Common myeloid progenitor, CD34-positive (primary cell): ENCODE measurements at regions of chr6 and their contacts with region 1.

Region 1: DNA sequence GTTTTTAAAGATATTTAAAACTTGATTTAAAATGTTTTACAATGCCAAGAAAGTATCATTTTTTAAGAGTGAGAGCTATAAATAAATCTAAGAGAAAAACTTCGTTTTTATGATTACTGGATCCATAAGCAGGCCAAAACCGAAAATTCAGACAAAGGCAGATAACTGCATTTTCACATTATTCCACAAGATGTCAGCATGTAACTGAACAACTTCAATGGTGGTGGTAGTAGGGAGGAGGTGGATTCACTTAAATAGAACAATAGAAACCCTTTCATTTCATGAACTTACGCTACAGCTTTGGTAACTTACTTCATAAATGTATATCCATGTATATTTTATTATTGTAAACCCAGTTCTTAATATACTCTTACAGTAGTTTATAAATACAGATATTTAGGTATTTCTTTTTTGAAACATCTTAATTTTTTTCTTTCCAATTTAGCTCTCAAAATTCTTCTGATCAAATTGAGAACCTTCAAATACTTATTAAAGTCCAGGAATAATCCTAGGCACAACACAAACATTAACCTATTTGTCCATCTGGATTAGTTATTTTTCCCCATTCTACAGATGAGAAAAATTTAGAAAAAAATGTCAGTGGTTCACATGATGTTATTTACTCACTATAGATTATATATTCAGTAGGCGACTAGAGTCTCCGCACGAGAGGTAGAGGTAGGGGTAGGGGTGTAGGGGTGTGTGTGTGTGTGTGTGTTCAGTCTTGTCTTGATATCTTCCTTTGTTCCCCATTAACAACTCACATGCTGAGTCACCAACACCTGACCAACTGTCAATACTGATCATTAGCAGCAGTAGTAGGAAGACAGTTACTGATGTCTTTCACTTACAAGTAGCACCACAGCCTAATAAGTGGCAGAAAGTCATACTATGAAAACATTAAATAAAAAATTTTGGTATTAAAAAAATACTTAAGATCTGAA is 111.5 kb downstream of the ARHGAP18 start:
- DNase-seq: peak; percentile 77 to 86 (median 82)
- H3K4me3 ChIP-seq: no peak overlapping the region
- H3K27ac ChIP-seq: no peak overlapping the region
- H3K4me1 ChIP-seq: no peaks in the 10 kb centered on the region
- H3K27me3 ChIP-seq: no peaks in the 10 kb centered on the region

Region 2: GRCh38 chr6:129736105-129736504 is 137.6 kb after region 1 on chr6:
- CTCF ChIA-PET with region 1: interaction called, 158 read pairs
- POLR2A ChIA-PET with region 1: no interaction called
- DNase-seq: no peak
- H3K4me3 ChIP-seq: no peak overlapping the region
- H3K27ac ChIP-seq: no peak overlapping the region
- H3K4me1 ChIP-seq: no peaks in the 10 kb centered on the region
- H3K27me3 ChIP-seq: peaks cover 0 to 8% (median 6%) of the 10 kb centered on the region in 5 experiments

Region 3: GRCh38 chr6:130020907-130021629 is 422.6 kb after region 1 on chr6:
- CTCF ChIA-PET with region 1: interaction called, 12 read pairs
- POLR2A ChIA-PET with region 1: no interaction called
- DNase-seq: peak; percentile 90 to 94 (median 92)
- H3K4me3 ChIP-seq: peak overlapping the region in 6 of 7 experiments; percentile 67 to 90 (median 76)
- H3K27ac ChIP-seq: peak overlapping the region in 1 of 2 experiments; percentile 40
- H3K4me1 ChIP-seq: peaks cover 5 to 13% (median 9%) of the 10 kb centered on the region in 4 experiments
- H3K27me3 ChIP-seq: no peaks in the 10 kb centered on the region